Activated CD8-positive, alpha-beta T cell treated with anti-CD3 and anti-CD28 coated beads for 36 hours (primary cell): ENCODE measurements at regions of chr3 and their contacts with region 1.

Region 1: DNA sequence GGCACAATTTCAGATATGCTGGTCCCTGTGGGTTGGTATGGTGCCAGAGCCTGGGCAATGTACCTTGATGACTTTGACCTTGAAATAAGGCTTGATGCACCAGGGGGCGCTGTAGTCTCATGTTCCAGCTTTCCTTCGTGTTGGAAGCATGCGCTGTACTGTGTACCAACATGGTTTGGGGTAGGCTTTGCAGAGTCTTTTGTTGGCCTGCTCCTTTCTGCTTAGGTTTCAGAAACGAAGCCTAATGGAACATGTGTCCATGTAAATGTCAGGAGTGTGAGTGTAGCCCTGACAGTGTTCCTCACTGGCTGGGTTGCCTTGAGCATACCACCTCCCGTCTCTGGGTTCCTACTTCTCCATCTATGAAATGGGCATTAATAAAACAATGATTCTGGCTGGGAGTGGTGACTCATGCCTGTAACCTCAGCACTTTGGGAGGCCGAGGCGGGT is 3.6 kb upstream of the CCR4 start:
- DNase-seq: peak; percentile 99
- ATAC-seq: peak; percentile 74
- H3K4me3 Mint-ChIP-seq: no peak overlapping the region
- H3K27ac Mint-ChIP-seq: peak overlapping the region; percentile 25
- H3K4me1 Mint-ChIP-seq: peaks cover 42% of the 10 kb centered on the region
- H3K27me3 Mint-ChIP-seq: no peaks in the 10 kb centered on the region
- CTCF ChIP-seq: peak; percentile 80

Region 2: GRCh38 chr3:32484436-32484835 is 463.4 kb before region 1 on chr3:
- CTCF ChIA-PET with region 1: no interaction called
- POLR2A ChIA-PET with region 1: no interaction called
- intact Hi-C with region 1: no loop called
- DNase-seq: no peak
- ATAC-seq: no peak
- H3K4me3 Mint-ChIP-seq: no peak overlapping the region
- H3K27ac Mint-ChIP-seq: no peak overlapping the region
- H3K4me1 Mint-ChIP-seq: peaks cover 22% of the 10 kb centered on the region
- H3K27me3 Mint-ChIP-seq: no peaks in the 10 kb centered on the region
- CTCF ChIP-seq: no peak

Region 3: DNA sequence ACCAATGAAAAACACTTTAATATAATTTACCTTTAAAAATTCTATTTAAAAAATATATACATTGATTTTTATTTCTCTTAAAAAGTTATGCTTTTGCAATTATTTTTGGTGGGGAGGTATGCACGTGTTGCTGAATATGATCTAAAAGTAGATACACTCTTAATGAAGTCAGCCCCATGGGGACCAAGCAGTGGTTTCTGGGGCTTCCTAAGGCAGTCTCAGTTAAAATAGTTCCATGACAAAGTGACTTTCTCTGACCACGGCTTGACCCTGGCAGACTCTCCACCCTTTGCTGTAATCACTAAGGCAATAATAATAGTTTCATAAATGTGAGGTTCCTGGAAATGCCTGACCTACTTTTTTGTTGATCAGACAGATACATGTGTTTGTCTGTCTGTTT is 54.1 kb after region 1 on chr3:
- CTCF ChIA-PET with region 1: interaction called, 22 read pairs
- POLR2A ChIA-PET with region 1: interaction called, 6 read pairs
- intact Hi-C with region 1: loop called (anchors 5 kb)
- DNase-seq: peak; percentile 62
- ATAC-seq: peak; percentile 41
- H3K4me3 Mint-ChIP-seq: no peak overlapping the region
- H3K27ac Mint-ChIP-seq: no peak overlapping the region
- H3K4me1 Mint-ChIP-seq: peaks cover 59% of the 10 kb centered on the region
- H3K27me3 Mint-ChIP-seq: no peaks in the 10 kb centered on the region
- CTCF ChIP-seq: no peak

Region 4: DNA sequence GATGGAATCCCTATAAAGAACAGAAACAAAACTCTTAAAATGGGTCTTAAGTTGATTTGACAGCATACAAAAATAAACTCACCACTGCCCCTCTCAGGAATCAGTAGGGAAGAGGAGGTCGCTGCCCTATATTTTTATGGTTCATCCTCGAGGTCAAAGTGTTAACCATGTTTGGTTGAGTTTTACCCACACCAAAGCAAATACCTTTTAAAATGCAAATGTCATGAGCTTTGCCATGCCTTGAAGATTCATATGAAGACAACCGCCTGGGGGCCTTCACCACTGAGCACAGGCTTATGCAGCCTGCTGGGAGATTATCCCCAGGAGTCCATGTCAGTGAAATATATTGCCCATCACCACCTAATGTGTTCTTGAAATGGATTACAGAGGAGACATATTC is 83.0 kb after region 1 on chr3:
- CTCF ChIA-PET with region 1: interaction called, 47 read pairs
- POLR2A ChIA-PET with region 1: interaction called, 7 read pairs
- intact Hi-C with region 1: no loop called
- DNase-seq: peak; percentile 84
- ATAC-seq: peak; percentile 92
- H3K4me3 Mint-ChIP-seq: no peak overlapping the region
- H3K27ac Mint-ChIP-seq: no peak overlapping the region
- H3K4me1 Mint-ChIP-seq: peaks cover 23% of the 10 kb centered on the region
- H3K27me3 Mint-ChIP-seq: no peaks in the 10 kb centered on the region
- CTCF ChIP-seq: peak; percentile 36

Region 5: GRCh38 chr3:33063651-33064051 is 115.8 kb after region 1 on chr3:
- CTCF ChIA-PET with region 1: interaction called, 14 read pairs
- POLR2A ChIA-PET with region 1: interaction called, 3 read pairs
- intact Hi-C with region 1: no loop called
- DNase-seq: peak; percentile 92
- ATAC-seq: peak; percentile 78
- H3K4me3 Mint-ChIP-seq: peak overlapping the region; percentile 24
- H3K27ac Mint-ChIP-seq: peak overlapping the region; percentile 93
- H3K4me1 Mint-ChIP-seq: peaks cover 63% of the 10 kb centered on the region
- H3K27me3 Mint-ChIP-seq: no peaks in the 10 kb centered on the region
- CTCF ChIP-seq: no peak

Region 6: GRCh38 chr3:33372218-33373081 is 424.6 kb after region 1 on chr3:
- CTCF ChIA-PET with region 1: interaction called, 7 read pairs
- POLR2A ChIA-PET with region 1: no interaction called
- intact Hi-C with region 1: loop called (anchors 5 kb)
- DNase-seq: peak; percentile 59
- ATAC-seq: peak; percentile 93
- H3K4me3 Mint-ChIP-seq: no peak overlapping the region
- H3K27ac Mint-ChIP-seq: no peak overlapping the region
- H3K4me1 Mint-ChIP-seq: peaks cover 2% of the 10 kb centered on the region
- H3K27me3 Mint-ChIP-seq: peaks cover 12% of the 10 kb centered on the region
- CTCF ChIP-seq: peak; percentile 98